ENCODE measurements at regions of chr5 and their contacts with region 1.

Region 1: GRCh38 chr5:140251527-140251973 is 51.4 kb downstream of the PFDN1 start:
- DNase-seq: peak; percentile 64
- H3K4me3 ChIP-seq: no peak overlapping the region
- H3K27ac ChIP-seq: peak overlapping the region; percentile 43
- H3K4me1 ChIP-seq: peaks cover 48% of the 10 kb centered on the region
- CTCF ChIP-seq: no peak

Region 2: DNA sequence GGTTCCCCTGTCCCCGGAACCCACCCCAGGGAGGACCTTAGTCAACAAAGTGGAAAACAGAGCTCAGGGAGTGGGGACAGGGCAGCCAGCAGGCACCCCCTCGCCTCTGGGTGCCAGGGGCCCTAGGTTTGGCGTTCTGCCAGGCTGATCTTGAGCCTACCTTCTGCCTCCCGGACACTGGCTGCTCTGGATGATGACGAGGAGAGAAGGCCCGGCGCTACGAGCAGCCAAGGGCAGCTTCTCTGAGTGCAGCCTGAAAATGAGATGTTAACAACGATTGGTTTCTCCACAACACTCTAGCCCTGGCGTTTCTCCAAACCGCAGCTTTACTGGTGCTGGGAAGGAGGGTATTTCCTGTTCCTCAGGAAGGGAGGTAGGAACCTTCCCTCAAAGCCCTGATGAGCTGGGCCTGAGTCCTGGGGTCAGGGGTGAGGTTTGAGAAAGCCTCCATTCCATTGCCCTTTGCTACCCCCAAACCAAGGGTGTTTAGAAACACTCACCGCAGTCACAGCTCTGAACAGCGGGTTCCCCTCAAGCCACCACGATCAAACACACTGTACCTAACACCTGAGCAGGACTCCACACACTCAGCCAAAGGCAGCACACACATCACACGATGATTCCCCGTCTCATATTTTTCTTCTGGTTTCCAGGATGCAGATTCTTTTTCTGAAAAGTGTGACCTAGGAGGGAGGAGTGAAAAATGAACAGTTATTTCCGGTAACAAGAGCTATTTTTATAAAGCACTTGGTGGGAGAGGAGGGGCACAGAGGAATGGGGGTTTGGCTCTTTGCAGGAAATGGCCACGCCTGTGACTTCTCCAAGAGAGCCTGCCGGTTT is 769.3 kb before region 1 on chr5 and contains the start of gene STING1:
- CTCF ChIA-PET with region 1: no interaction called
- POLR2A ChIA-PET with region 1: no interaction called
- intact Hi-C with region 1: no loop called
- DNase-seq: no peak
- H3K4me3 ChIP-seq: no peak within 1 kb of the TSS
- H3K27ac ChIP-seq: no peak within 1 kb of the TSS
- H3K4me1 ChIP-seq: peaks cover 10% of the 10 kb centered on the region
- CTCF ChIP-seq: no peak
- total RNA-seq, gene STING1: not detected in 2 replicates

Region 3: GRCh38 chr5:140261403-140262171 is 10.0 kb after region 1 on chr5:
- CTCF ChIA-PET with region 1: interaction called, 4 read pairs
- POLR2A ChIA-PET with region 1: interaction called, 38 read pairs
- intact Hi-C with region 1: no loop called
- DNase-seq: no peak
- H3K4me3 ChIP-seq: no peak overlapping the region
- H3K27ac ChIP-seq: no peak overlapping the region
- H3K4me1 ChIP-seq: peaks cover 18% of the 10 kb centered on the region
- CTCF ChIP-seq: no peak

Region 4: DNA sequence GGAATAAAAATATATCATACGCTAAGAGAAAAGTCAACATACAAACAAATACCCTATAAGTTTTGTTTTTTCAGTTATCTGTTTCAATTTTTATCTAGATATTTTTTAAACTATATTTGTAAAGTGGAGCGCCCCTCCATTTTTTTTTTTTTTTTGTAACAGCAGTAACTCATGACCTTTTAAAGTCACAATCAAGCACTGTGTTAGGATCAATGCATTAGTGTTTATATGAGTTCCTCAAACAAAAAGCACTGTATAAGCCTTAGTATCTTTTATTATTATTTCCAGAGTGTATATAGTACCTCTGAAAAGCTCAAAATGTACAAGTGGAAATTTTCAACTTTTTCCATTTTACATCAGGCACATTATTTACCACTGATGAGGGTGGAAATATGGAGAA is 30.7 kb after region 1 on chr5:
- CTCF ChIA-PET with region 1: interaction called, 13 read pairs
- POLR2A ChIA-PET with region 1: interaction called, 12 read pairs
- intact Hi-C with region 1: no loop called
- DNase-seq: no peak
- H3K4me3 ChIP-seq: no peak overlapping the region
- H3K27ac ChIP-seq: peak overlapping the region; percentile 44
- H3K4me1 ChIP-seq: peaks cover 57% of the 10 kb centered on the region
- CTCF ChIP-seq: no peak